ENCODE measurements at regions of chr7 and their contacts with region 1.

Region 1: GRCh38 chr7:44797329-44798251 is 1.1 kb downstream of the PPIA start:
- H3K4me3 Mint-ChIP-seq: peak overlapping the region; percentile 88
- H3K27ac Mint-ChIP-seq: peak overlapping the region; percentile 93
- H3K4me1 Mint-ChIP-seq: peaks cover 13% of the 10 kb centered on the region
- H3K27me3 Mint-ChIP-seq: no peaks in the 10 kb centered on the region

Region 2: GRCh38 chr7:44490351-44491200 is 307.0 kb before region 1 on chr7 and contains the start of gene NUDCD3:
- intact Hi-C with region 1: loop called (anchors 5 kb)
- H3K4me3 Mint-ChIP-seq: peak within 1 kb of the TSS; percentile 95
- H3K27ac Mint-ChIP-seq: peak within 1 kb of the TSS; percentile 90
- H3K4me1 Mint-ChIP-seq: peaks cover 48% of the 10 kb centered on the region
- H3K27me3 Mint-ChIP-seq: peaks cover 4% of the 10 kb centered on the region

Region 3: DNA sequence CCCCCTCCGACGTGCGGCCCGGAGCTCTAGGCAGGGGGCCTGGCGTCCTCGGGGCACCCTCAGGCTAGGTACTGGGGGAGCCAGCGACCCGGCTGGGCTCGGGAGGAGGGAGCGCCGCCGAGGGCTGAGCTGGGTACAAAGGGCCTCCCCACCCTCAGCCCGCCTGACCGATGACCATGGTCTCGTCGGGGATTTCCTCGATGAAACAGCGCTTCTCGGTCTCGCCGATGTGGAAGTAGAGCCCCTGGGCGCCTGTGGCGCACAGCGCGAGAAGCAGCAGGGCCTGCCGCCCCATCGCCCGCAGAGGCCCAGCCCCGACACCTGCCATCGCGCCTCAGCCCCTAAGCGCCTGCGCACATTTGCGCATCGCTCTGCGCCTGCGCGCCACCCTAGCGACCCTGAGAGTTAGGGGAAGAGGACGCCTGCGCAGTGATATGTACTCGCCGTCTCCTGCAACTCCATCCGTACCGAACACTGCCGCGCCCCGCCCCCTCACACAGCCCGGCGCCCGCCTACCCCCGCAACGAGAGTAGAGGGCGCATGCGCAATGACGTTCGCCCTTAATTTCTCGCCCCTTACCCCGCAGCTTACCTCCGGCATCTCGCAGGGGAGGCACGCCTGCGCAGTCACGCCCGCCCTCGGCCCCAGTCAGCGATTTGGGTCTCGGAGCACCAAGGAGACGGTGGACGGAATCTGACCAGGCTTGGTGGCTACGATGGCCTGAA is 215.5 kb before region 1 on chr7 and contains the start of gene TMED4:
- intact Hi-C with region 1: loop called (anchors 2 kb)
- H3K4me3 Mint-ChIP-seq: peak within 1 kb of the TSS; percentile 90
- H3K27ac Mint-ChIP-seq: peak within 1 kb of the TSS; percentile 97
- H3K4me1 Mint-ChIP-seq: peaks cover 34% of the 10 kb centered on the region
- H3K27me3 Mint-ChIP-seq: peaks cover 1% of the 10 kb centered on the region

Region 4: GRCh38 chr7:44606450-44607254 is 190.9 kb before region 1 on chr7 and contains the start of gene OGDH:
- intact Hi-C with region 1: loop called (anchors 1 kb)
- H3K4me3 Mint-ChIP-seq: peak within 1 kb of the TSS; percentile 94
- H3K27ac Mint-ChIP-seq: peak within 1 kb of the TSS; percentile 98
- H3K4me1 Mint-ChIP-seq: peaks cover 53% of the 10 kb centered on the region
- H3K27me3 Mint-ChIP-seq: peaks cover 11% of the 10 kb centered on the region

Region 5: GRCh38 chr7:44748045-44748947 is 49.3 kb before region 1 on chr7 and contains the start of gene ZMIZ2:
- intact Hi-C with region 1: loop called (anchors 1 kb)
- H3K4me3 Mint-ChIP-seq: peak within 1 kb of the TSS; percentile 91
- H3K27ac Mint-ChIP-seq: peak within 1 kb of the TSS; percentile 85
- H3K4me1 Mint-ChIP-seq: peaks cover 61% of the 10 kb centered on the region
- H3K27me3 Mint-ChIP-seq: no peaks in the 10 kb centered on the region

Region 6: DNA sequence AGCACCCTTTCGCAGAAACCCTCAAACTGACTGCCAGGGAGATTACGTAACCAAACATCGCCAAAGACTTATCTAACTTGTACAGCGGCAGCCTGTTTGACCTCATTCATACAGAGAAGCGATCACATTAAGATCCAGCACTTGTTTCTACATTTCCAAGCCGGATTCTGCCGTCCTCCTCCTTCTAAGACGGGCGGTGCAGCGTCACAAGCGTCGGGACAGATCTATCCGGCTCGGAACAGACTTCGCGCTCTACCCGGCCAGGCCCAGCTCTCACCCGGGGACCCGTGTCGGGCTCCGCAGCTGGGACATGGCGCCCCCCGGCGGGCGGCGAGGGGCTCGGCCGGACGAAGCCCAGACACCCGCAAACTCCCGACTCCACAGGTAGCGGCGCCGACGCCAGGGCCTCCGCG is 49.9 kb after region 1 on chr7:
- intact Hi-C with region 1: loop called (anchors 1 kb)
- H3K4me3 Mint-ChIP-seq: peak overlapping the region; percentile 85
- H3K27ac Mint-ChIP-seq: peak overlapping the region; percentile 93
- H3K4me1 Mint-ChIP-seq: peaks cover 46% of the 10 kb centered on the region
- H3K27me3 Mint-ChIP-seq: no peaks in the 10 kb centered on the region

Region 7: GRCh38 chr7:44885394-44886317 is 88.1 kb after region 1 on chr7 and contains the start of gene PURB:
- intact Hi-C with region 1: loop called (anchors 5 kb)
- H3K4me3 Mint-ChIP-seq: peak within 1 kb of the TSS; percentile 88
- H3K27ac Mint-ChIP-seq: peak within 1 kb of the TSS; percentile 99
- H3K4me1 Mint-ChIP-seq: peaks cover 49% of the 10 kb centered on the region
- H3K27me3 Mint-ChIP-seq: no peaks in the 10 kb centered on the region